ENCODE measurements at regions of chr3 and their contacts with region 1.

Region 1: GRCh38 chr3:195154793-195155535 is 116.0 kb downstream of the XXYLT1 start:
- DNase-seq: no peak
- H3K4me3 Mint-ChIP-seq: no peak overlapping the region
- H3K27ac Mint-ChIP-seq: no peak overlapping the region
- H3K4me1 Mint-ChIP-seq: peaks cover 20% of the 10 kb centered on the region
- H3K27me3 Mint-ChIP-seq: no peaks in the 10 kb centered on the region

Region 2: GRCh38 chr3:195106418-195106906 is 48.5 kb before region 1 on chr3:
- intact Hi-C with region 1: no loop called
- DNase-seq: peak; percentile 41
- H3K4me3 Mint-ChIP-seq: no peak overlapping the region
- H3K27ac Mint-ChIP-seq: no peak overlapping the region
- H3K4me1 Mint-ChIP-seq: peaks cover 4% of the 10 kb centered on the region
- H3K27me3 Mint-ChIP-seq: no peaks in the 10 kb centered on the region

Region 3: GRCh38 chr3:195139091-195139839 is 15.7 kb before region 1 on chr3:
- intact Hi-C with region 1: no loop called
- DNase-seq: no peak
- H3K4me3 Mint-ChIP-seq: no peak overlapping the region
- H3K27ac Mint-ChIP-seq: no peak overlapping the region
- H3K4me1 Mint-ChIP-seq: no peaks in the 10 kb centered on the region
- H3K27me3 Mint-ChIP-seq: no peaks in the 10 kb centered on the region

Region 4: DNA sequence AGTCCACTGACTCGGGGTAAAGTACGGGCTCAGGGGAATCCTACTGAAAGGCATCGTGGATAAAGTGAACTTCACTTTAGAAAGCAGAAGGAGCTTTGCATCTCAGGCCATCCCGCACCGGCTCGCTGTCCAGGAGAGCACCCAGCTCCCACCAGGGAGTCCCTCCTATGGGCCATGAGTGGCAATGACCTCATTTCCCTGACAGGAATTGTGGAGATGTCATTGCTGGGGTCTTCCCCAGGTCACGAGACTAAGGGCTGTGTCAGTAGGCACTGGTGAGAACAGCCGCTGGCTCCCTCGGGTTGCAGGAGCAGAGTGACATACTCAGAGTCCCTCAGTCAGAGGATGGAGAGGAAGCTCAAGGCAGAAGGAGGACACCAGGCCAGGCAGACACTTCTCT is 18.7 kb after region 1 on chr3:
- intact Hi-C with region 1: no loop called
- DNase-seq: no peak
- H3K4me3 Mint-ChIP-seq: no peak overlapping the region
- H3K27ac Mint-ChIP-seq: no peak overlapping the region
- H3K4me1 Mint-ChIP-seq: peaks cover 3% of the 10 kb centered on the region
- H3K27me3 Mint-ChIP-seq: no peaks in the 10 kb centered on the region

Region 5: DNA sequence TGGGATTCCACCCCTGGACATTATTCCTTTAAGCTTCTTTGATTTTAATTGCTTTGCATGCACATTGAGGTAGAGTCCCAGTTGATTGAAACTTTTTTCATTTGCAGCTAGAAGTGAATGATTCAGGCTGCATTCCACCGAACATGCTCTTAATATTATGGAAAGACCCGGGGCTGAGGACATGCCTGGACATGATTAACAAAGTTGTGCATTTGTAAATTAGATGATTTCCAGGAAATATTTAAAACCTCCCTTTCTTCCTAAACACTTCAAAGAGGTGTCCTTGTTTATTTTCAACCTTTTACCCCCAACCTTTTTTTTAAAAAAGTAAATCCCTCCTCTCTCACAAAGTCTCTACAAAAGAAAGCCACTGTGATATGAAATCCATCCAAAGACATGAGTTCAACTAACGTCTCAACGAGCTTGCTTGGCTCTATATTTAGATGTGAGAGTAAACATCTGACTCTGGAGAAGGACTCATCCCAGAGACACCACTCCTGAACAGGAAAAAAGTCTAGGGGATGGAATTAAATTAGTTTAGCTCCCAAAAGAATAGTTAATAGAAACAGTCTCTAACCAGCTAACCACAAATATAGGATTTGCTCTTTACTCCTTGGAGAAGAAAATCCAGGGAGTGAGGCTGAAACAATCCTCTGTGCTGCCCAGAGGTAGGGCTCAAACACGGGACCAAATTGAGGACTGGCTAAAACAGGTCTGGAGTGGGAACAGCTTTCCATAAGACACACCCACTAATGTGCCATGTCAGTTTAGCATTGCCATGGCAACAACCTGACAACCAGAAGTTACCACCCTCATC is 32.9 kb after region 1 on chr3:
- intact Hi-C with region 1: loop called (anchors 5 kb)
- DNase-seq: no peak
- H3K4me3 Mint-ChIP-seq: no peak overlapping the region
- H3K27ac Mint-ChIP-seq: no peak overlapping the region
- H3K4me1 Mint-ChIP-seq: peaks cover 27% of the 10 kb centered on the region
- H3K27me3 Mint-ChIP-seq: no peaks in the 10 kb centered on the region

Region 6: GRCh38 chr3:195204360-195205163 is 49.6 kb after region 1 on chr3:
- intact Hi-C with region 1: no loop called
- DNase-seq: no peak
- H3K4me3 Mint-ChIP-seq: no peak overlapping the region
- H3K27ac Mint-ChIP-seq: no peak overlapping the region
- H3K4me1 Mint-ChIP-seq: peaks cover 7% of the 10 kb centered on the region
- H3K27me3 Mint-ChIP-seq: no peaks in the 10 kb centered on the region

Measured in activated T-helper 2 cell treated with anti-CD3 and anti-CD28 coated beads, Interferon-gamma antibody, Interleukin-2, Interleukin-4, amounts not matched to agents 10 μg/mL and 5 μg/mL and 100 μg/mL, durations not matched to agents 14 hours and 24 hours and 36 hours (primary cell).